ENCODE measurements at regions of chr17 and their contacts with region 1.

Region 1: DNA sequence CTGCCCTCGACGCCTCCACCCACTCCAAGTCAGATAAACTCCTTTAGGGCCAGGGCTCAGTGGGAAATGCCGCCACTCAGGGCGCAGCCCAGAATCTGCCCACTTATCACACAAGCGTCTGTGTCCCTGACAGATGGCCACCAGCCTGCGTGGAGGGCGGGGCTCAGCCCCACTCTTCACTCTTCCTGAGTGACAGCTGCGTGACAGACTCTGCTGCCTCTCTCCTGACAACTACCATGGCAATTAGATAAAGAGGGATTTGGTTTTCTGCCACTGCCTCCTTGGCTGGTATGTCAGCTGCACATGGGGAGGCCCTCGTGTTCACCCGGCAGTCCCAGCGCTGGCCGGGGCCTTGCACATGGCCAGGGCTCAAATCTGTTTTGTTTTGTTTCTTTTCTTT is 96.2 kb downstream of the RTN4RL1 start:
- DNase-seq: no peak
- H3K4me3 ChIP-seq: no peak overlapping the region
- H3K27ac ChIP-seq: no peak overlapping the region
- H3K4me1 ChIP-seq: peaks cover 3 to 4% of the 10 kb centered on the region in 2 donors
- H3K27me3 ChIP-seq: no peaks in the 10 kb centered on the region
- CTCF ChIP-seq: no peak
- POLR2A ChIP-seq: no peak

Region 2: DNA sequence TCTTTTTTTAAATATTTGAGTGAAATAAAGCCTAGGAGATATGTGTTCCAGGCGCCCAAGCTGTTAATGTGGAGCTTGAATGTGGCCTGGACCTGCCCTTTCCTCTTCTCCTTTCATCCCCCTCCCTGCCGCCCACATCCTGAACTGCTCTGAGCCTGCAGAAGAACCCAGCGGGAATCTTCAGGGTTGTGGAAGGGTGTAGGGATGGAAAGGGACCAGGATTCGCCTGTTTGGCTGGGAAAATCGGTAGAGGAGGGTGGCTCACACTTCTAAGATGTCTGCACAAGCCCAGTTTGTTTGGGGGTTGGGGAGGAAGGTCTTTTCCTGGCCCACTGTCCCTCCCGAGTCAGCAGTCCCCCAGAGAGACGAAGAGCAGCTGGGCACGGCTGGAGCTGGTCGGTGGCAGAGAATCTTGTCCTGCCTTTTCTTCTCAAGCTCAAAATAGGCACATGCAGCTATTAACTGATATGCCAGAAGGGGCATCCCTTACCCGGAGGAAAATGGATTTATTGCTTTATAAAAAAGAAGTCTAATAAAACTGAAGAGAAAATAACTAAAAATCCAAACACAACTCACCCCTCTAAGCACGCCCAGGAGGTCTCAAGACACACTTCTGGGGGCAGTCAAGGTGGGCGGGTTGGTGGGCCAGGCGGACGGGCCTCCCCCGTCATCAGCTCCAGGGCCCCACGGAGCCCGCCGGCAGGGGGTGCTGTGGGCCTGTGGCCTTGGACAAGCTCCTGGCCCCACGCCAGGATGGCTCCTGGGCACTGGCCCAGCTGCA is 354.9 kb before region 1 on chr17:
- intact Hi-C with region 1: no loop called
- DNase-seq: peak; percentile 88 to 89
- H3K4me3 ChIP-seq: no peak overlapping the region
- H3K27ac ChIP-seq: peak overlapping the region in 2 of 3 donors; percentile 54 to 80
- H3K4me1 ChIP-seq: peaks cover 15 to 38% of the 10 kb centered on the region in 2 donors
- H3K27me3 ChIP-seq: no peaks in the 10 kb centered on the region
- CTCF ChIP-seq: peak; percentile 91 to 98 (median 94)
- POLR2A ChIP-seq: no peak

Region 3: DNA sequence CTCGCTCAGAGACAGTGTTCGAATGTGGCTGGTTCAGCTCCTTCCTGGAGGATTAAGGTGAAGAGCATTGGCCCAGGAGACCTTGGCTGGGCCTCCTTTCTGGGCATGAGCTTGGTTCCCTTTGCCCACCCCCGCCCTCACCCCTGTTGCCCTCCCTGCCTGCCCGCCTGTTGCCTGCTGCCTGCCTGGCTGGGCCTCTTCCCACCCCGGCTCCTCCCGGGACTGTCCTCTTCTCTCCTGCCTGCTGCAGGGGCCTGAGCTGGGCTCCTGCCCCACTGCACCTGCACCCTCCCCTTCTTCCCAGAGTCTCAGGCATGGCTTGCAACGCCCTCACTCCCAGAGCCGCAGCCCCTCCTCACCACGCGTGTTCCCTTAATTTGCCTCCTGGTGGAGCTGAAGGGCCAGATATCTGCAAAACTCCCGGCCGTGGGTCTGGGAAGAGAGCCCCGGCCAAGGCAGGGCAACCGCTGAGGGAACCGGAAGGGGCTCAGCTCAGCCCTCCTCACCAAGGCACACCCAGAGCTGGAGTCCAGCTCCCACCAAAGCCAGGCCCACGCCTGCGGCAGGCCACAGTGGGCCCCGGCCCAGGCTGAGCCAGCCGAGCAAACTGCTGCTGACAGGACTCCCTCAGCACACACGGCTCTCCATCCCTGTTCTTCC is 440.7 kb after region 1 on chr17:
- intact Hi-C with region 1: loop called (anchors 10 kb)
- DNase-seq: no peak
- H3K4me3 ChIP-seq: no peak overlapping the region
- H3K27ac ChIP-seq: no peak overlapping the region
- H3K4me1 ChIP-seq: no peaks in the 10 kb centered on the region
- H3K27me3 ChIP-seq: no peaks in the 10 kb centered on the region
- CTCF ChIP-seq: no peak
- POLR2A ChIP-seq: no peak

Measured in thyroid gland (tissue), 4 donors.